ENCODE measurements at regions of chr17 and their contacts with region 1.

Region 1: GRCh38 chr17:7014261-7014994 is 2.0 kb downstream of the RNASEK start:
- DNase-seq: peak; percentile 99 to 100 (median 99)
- H3K4me3 ChIP-seq: peak overlapping the region; percentile 95 to 98 (median 97)
- H3K4me3 Mint-ChIP-seq: peak overlapping the region; percentile 94 to 98
- H3K27ac ChIP-seq: peak overlapping the region; percentile 98 to 100
- H3K27ac Mint-ChIP-seq: peak overlapping the region; percentile 99 to 100 (median 100)
- H3K4me1 ChIP-seq: peaks cover 49 to 66% of the 10 kb centered on the region in 2 donors
- H3K4me1 Mint-ChIP-seq: peaks cover 60% of the 10 kb centered on the region
- H3K27me3 ChIP-seq: no peaks in the 10 kb centered on the region
- H3K27me3 Mint-ChIP-seq: peaks cover 2 to 9% (median 3%) of the 10 kb centered on the region in 3 donors
- CTCF ChIP-seq: peak; percentile 92

Region 2: GRCh38 chr17:6651357-6651918 is 363.0 kb before region 1 on chr17 and contains the starts of genes C17orf100 and MED31:
- intact Hi-C with region 1: loop called in 1 of 2 experiments (anchors 5 kb)
- DNase-seq: peak; percentile 96 to 97 (median 96)
- H3K4me3 ChIP-seq: peak within 1 kb of the TSS; percentile 75 to 96 (median 95)
- H3K4me3 Mint-ChIP-seq: peak within 1 kb of the TSS; percentile 96 to 99
- H3K27ac ChIP-seq: peak within 1 kb of the TSS; percentile 91 to 99
- H3K27ac Mint-ChIP-seq: peak within 1 kb of the TSS; percentile 98 to 100 (median 99)
- H3K4me1 ChIP-seq: peaks cover 29 to 41% of the 10 kb centered on the region in 2 donors
- H3K4me1 Mint-ChIP-seq: peaks cover 52% of the 10 kb centered on the region
- H3K27me3 ChIP-seq: peaks cover 36 to 42% of the 10 kb centered on the region in 2 donors
- H3K27me3 Mint-ChIP-seq: peaks cover 41 to 44% (median 42%) of the 10 kb centered on the region in 3 donors
- CTCF ChIP-seq: no peak
- polyA plus RNA-seq, gene C17orf100: 0.51 to 1.8 (median 1.2) TPM
- polyA plus RNA-seq, gene MED31: 6.8 to 38.2 (median 33.6) TPM

Measured in CD14-positive monocyte (primary cell).